Esophagus muscularis mucosa (tissue), 4 donors: ENCODE measurements at regions of chr2 and their contacts with region 1.

Region 1: DNA sequence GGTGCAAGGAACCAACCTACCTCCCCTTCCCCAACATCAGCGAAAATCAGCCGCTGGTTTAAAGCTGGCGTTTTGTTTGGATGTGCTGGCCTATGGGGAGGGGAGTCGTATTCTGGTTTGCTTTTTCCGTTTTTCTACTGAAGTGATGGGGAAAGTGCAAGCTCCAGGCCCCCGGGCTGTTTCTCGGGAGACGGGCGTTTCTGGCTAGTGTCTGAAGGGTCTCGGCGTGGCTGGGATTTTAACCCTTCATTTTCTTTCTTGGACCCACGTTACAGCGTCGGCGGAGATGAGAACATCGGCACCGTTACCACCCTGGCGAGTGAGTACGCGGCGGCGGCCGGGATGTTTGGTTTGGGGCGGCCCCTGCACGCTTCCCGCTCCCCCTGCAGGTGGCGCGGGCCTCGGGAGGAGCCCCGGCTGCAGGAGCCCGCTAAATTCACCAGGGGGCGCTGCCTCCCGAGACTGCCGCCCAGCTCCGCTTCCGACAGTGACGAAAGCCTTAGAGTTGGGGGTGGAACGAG is 70.7 kb downstream of the PLB1 start:
- DNase-seq: peak; percentile 95
- H3K4me3 ChIP-seq: peak overlapping the region; percentile 51 to 62 (median 60)
- H3K27ac ChIP-seq: peak overlapping the region; percentile 61 to 76 (median 72)
- H3K4me1 ChIP-seq: peaks cover 5 to 19% (median 13%) of the 10 kb centered on the region in 4 donors
- H3K27me3 ChIP-seq: no peaks in the 10 kb centered on the region
- CTCF ChIP-seq: peak in 2 of 3 experiments; percentile 100
- EP300 ChIP-seq: no peak
- POLR2A ChIP-seq: no peak

Region 2: DNA sequence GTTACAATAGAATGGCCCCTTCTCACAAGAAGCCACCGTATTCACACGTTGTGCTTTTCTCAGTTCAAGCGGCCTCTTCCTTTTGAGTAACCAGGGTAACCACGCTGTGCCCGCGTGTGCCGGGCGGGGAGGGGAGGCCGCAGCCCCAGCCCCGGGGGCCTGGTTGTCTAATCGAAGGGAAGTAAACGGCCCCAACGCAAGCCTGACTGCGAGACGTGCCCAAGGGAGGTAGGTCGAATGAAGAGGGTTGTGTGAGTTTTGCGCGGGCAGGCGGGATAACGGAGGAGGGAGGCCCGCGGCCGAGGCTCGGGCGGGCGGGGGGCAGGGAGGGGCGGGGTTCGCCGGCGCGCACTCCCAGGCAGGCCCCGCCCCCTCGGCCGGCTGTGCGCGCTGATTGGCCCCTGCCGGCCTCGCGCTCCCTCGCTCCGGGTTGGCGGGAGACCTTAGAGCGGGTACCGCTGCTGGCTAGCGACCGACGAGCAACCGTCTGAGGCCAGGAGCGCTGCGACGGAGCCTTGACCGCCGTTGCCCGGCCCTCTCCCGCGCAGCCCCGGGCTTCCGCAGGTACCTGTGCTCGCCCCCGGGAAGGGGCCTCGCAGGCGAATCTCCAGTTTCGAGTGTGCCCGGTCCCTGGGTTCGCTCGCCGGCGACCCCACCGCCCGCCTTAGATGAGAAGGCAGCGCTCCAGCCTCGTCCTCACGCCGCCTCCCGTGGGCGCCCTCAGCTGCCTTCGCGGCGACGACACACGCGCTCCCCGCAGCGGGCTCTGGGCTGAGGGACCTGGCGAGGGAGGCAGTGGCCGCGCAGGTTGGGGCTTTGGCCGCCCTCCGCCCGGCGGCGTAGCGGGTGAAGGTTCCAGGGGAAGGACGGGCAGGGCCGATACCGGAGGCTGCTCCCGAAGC is 244.1 kb after region 1 on chr2 and contains the start of gene SPDYA:
- intact Hi-C with region 1: loop called (anchors 5 kb)
- DNase-seq: peak; percentile 93
- H3K4me3 ChIP-seq: peak within 1 kb of the TSS; percentile 54 to 66 (median 56)
- H3K27ac ChIP-seq: peak within 1 kb of the TSS; percentile 53 to 70 (median 66)
- H3K4me1 ChIP-seq: peaks cover 19 to 25% (median 22%) of the 10 kb centered on the region in 4 donors
- H3K27me3 ChIP-seq: no peaks in the 10 kb centered on the region
- CTCF ChIP-seq: peak in 2 of 3 experiments; percentile 4 to 9
- EP300 ChIP-seq: no peak
- POLR2A ChIP-seq: no peak
- total RNA-seq, gene SPDYA: 0.33 to 3.0 (median 0.91) TPM

Region 3: DNA sequence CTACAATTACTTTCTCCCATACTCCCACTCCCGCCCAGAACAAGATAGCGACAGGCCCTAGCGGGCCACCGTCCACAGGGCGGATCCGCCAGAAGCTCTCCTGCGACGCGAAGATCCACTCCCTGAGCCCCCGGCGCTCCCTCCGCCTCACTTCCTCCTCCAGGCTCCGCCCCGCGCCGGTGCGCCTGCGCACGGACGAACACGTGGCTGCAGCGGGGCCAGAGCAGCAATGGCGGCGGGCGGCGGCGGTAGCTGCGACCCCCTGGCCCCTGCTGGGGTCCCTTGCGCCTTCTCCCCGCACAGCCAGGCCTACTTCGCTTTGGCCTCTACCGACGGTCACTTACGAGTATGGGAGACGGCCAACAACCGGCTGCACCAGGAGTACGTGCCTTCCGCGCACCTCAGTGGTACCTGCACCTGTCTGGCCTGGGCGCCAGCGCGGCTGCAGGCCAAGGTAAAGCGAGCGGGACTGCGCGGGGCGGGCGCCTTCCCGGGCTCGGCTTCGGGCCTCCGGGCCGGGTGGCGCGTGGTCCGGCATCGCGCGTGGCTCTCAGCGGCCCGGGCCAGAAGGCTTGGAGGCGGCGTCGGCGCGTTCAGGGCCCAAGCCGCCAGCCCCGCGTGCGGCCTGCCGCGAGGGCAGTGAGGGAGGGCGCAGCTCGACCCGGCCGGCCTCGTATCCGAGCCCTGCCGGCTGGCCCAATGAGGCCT is 328.0 kb after region 1 on chr2 and contains the start of gene WDR43:
- intact Hi-C with region 1: loop called (anchors 10 kb)
- DNase-seq: peak; percentile 98
- H3K4me3 ChIP-seq: peak within 1 kb of the TSS; percentile 91 to 98 (median 96)
- H3K27ac ChIP-seq: peak within 1 kb of the TSS; percentile 75 to 89 (median 82)
- H3K4me1 ChIP-seq: peaks cover 19 to 39% (median 38%) of the 10 kb centered on the region in 4 donors
- H3K27me3 ChIP-seq: no peaks in the 10 kb centered on the region
- CTCF ChIP-seq: peak in 1 of 3 experiments; percentile 10
- EP300 ChIP-seq: no peak
- POLR2A ChIP-seq: peak; percentile 52
- total RNA-seq, gene WDR43: 21.5 to 53.0 (median 31.0) TPM

Region 4: DNA sequence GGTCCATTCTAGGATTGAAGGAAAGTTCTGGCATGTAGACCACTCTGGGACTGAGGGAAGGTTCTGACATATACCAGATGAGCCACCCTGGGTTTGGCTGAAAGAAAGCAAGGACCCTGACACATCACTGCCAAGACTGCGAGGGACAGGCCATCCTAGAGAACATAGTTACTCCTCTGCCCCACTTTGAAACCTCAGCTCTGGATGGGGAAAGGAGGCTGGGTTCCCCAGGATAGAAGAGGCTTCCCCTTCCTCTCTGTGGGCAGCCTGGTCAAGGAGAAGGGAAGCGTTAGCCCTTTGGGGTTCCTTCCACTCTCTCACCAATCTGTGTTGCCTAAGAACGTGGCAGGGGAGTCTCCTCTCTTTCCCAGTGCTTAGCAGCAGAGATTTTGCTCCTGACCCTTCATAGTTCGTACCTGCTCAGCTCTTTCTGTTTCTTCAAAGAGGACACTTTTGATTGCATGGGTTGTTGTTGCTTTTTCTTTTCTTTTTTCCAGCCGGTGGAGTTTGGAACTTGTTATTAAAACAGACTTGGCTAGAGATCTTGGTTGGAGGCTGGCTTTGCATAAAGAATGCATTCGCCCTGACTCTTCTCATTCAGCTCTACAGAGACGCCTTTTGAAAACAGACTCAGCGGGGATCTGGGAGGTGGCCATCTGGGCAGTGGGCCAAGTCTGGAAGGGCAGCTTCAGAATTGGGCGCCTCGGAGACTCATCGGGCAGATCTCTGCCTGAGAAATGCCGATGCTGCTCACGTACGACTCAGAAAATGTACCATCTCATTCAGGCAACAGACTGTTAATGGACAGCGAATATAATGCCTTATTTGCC is 714.7 kb after region 1 on chr2:
- intact Hi-C with region 1: no loop called
- DNase-seq: no peak
- H3K4me3 ChIP-seq: peak overlapping the region in 2 of 4 donors; percentile 6 to 28
- H3K27ac ChIP-seq: no peak overlapping the region
- H3K4me1 ChIP-seq: peaks cover 0 to 17% (median 13%) of the 10 kb centered on the region in 4 donors
- H3K27me3 ChIP-seq: peaks cover 0 to 6% (median 0%) of the 10 kb centered on the region in 4 donors
- CTCF ChIP-seq: no peak
- EP300 ChIP-seq: no peak
- POLR2A ChIP-seq: no peak